Activated CD4-positive, alpha-beta memory T cell treated with anti-CD3 and anti-CD28 coated beads for 36 hours (primary cell): ENCODE measurements at regions of chr1 and their contacts with region 1.

Region 1: DNA sequence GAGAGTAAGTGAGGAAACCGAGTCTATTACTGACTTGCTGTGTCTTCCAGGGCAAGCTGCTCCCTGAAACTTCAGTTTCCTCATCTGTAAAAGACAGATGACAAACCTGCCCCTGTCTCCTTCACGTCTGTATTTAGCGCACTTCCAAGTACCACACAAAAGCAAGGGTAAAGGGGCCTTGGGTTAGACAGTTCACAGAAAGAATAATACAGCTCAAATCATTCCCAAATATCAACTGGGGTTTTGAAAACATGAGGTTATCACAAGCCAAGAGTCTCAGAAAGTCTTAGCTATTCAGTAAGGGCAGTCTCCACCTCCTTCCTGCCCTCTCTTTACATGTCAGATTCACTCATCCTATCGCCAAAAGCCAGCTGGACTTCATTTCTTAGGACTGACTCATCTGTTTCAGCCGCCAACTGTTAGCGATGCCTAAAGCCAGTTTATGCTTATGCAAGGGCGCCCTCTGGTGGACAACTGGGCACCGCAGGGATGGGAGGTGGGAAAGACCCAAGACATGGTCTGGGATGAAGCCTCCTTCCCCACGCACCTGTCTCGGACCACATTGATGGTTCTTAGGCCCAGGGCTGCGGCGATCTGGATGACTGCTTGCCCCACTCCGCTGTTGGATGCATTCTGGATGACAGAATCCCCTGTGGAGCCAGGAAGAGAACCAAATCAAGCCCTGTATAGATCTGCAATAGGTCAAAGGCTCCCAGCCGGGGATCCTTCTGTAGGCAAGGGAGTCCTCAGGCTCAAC is 21.1 kb upstream of the SRSF4 start:
- DNase-seq: peak; percentile 94
- H3K4me3 Mint-ChIP-seq: no peak overlapping the region
- H3K27ac Mint-ChIP-seq: peak overlapping the region; percentile 23
- H3K4me1 Mint-ChIP-seq: peaks cover 6% of the 10 kb centered on the region
- H3K27me3 Mint-ChIP-seq: no peaks in the 10 kb centered on the region

Region 2: GRCh38 chr1:28775121-28775944 is 427.4 kb before region 1 on chr1:
- CTCF ChIA-PET with region 1: interaction called, 4 read pairs
- POLR2A ChIA-PET with region 1: no interaction called
- intact Hi-C with region 1: loop called (anchors 10 kb)
- DNase-seq: peak; percentile 79
- H3K4me3 Mint-ChIP-seq: peak overlapping the region; percentile 68
- H3K27ac Mint-ChIP-seq: no peak overlapping the region
- H3K4me1 Mint-ChIP-seq: peaks cover 4% of the 10 kb centered on the region
- H3K27me3 Mint-ChIP-seq: no peaks in the 10 kb centered on the region

Region 3: GRCh38 chr1:28782011-28782410 is 420.8 kb before region 1 on chr1:
- CTCF ChIA-PET with region 1: interaction called, 10 read pairs
- POLR2A ChIA-PET with region 1: no interaction called
- intact Hi-C with region 1: loop called (anchors 10 kb)
- DNase-seq: no peak
- H3K4me3 Mint-ChIP-seq: no peak overlapping the region
- H3K27ac Mint-ChIP-seq: no peak overlapping the region
- H3K4me1 Mint-ChIP-seq: peaks cover 7% of the 10 kb centered on the region
- H3K27me3 Mint-ChIP-seq: peaks cover 1% of the 10 kb centered on the region

Region 4: GRCh38 chr1:29105839-29106238 is 96.9 kb before region 1 on chr1:
- CTCF ChIA-PET with region 1: no interaction called
- POLR2A ChIA-PET with region 1: no interaction called
- intact Hi-C with region 1: no loop called
- DNase-seq: no peak
- H3K4me3 Mint-ChIP-seq: no peak overlapping the region
- H3K27ac Mint-ChIP-seq: no peak overlapping the region
- H3K4me1 Mint-ChIP-seq: no peaks in the 10 kb centered on the region
- H3K27me3 Mint-ChIP-seq: no peaks in the 10 kb centered on the region

Region 5: GRCh38 chr1:29124366-29125236 is 78.2 kb before region 1 on chr1:
- CTCF ChIA-PET with region 1: interaction called, 28 read pairs
- POLR2A ChIA-PET with region 1: no interaction called
- intact Hi-C with region 1: loop called (anchors 5 kb)
- DNase-seq: peak; percentile 74
- H3K4me3 Mint-ChIP-seq: peak overlapping the region; percentile 70
- H3K27ac Mint-ChIP-seq: no peak overlapping the region
- H3K4me1 Mint-ChIP-seq: no peaks in the 10 kb centered on the region
- H3K27me3 Mint-ChIP-seq: peaks cover 18% of the 10 kb centered on the region

Region 6: GRCh38 chr1:29465755-29466154 is 263.0 kb after region 1 on chr1:
- CTCF ChIA-PET with region 1: no interaction called
- POLR2A ChIA-PET with region 1: no interaction called
- intact Hi-C with region 1: no loop called
- DNase-seq: no peak
- H3K4me3 Mint-ChIP-seq: no peak overlapping the region
- H3K27ac Mint-ChIP-seq: no peak overlapping the region
- H3K4me1 Mint-ChIP-seq: no peaks in the 10 kb centered on the region
- H3K27me3 Mint-ChIP-seq: peaks cover 4% of the 10 kb centered on the region